Naive thymus-derived CD4-positive, alpha-beta T cell (primary cell): ENCODE measurements at regions of chr6 and their contacts with region 1.

Region 1: GRCh38 chr6:158072083-158072721 is 90.5 kb downstream of the SYNJ2 start:
- DNase-seq: peak; percentile 28 to 69 (median 65)
- ATAC-seq: peak; percentile 85
- H3K4me3 ChIP-seq: no peak overlapping the region
- H3K4me3 Mint-ChIP-seq: no peak overlapping the region
- H3K27ac ChIP-seq: no peak overlapping the region
- H3K27ac Mint-ChIP-seq: peak overlapping the region; percentile 32 to 91 (median 55)
- H3K4me1 ChIP-seq: peaks cover 0 to 5% of the 10 kb centered on the region in 2 donors
- H3K4me1 Mint-ChIP-seq: peaks cover 5 to 31% (median 6%) of the 10 kb centered on the region in 7 donors
- H3K27me3 ChIP-seq: no peaks in the 10 kb centered on the region
- H3K27me3 Mint-ChIP-seq: no peaks in the 10 kb centered on the region

Region 2: DNA sequence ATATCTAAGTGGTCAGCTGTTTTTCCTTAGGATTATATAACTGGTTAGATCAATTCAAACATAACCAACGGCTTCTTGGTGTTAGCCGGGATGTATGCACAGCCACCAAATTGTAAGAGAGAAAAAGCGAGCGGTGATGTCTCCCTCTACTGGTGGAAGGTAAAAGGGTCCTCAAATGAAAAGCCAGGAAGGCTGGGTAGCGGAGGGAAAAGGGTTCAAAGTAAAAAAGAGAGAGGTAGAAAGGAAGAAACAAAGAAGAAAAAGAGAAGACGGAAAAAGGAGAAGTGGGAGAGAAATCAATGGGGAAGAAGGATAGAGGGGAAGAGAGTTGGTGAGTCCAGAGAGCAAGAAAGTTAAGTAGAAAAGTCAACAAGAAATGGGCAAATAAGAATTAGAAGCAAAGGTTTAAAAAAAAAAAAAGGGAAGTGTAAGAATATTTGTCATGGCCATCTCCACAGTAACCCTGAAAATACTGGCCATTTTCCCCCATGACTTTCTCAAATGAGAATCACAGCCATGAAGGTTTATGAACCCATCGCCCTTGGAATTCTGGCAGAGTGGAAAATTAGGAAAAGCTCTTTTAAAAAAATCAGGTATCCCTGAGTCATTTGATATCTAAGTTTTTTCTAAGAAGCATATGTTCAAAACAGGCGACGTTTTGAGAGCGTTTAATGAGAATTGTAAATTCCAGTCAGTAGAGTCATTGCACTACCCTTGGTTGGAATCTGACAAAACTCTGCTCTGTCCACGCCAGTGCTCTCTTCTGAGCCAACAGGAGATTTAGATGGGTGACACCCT is 404.8 kb before region 1 on chr6:
- CTCF ChIA-PET with region 1: no interaction called
- POLR2A ChIA-PET with region 1: no interaction called
- intact Hi-C with region 1: loop called in 1 of 2 experiments (anchors 1 kb)
- DNase-seq: peak in 8 of 9 donors; percentile 28 to 67 (median 54)
- ATAC-seq: peak; percentile 83
- H3K4me3 ChIP-seq: no peak overlapping the region
- H3K4me3 Mint-ChIP-seq: peak overlapping the region in 4 of 10 donors; percentile 1 to 35 (median 10)
- H3K27ac ChIP-seq: no peak overlapping the region
- H3K27ac Mint-ChIP-seq: peak overlapping the region in 7 of 9 donors; percentile 4 to 38 (median 19)
- H3K4me1 ChIP-seq: peaks cover 0 to 15% of the 10 kb centered on the region in 2 donors
- H3K4me1 Mint-ChIP-seq: peaks cover 7 to 31% (median 23%) of the 10 kb centered on the region in 7 donors
- H3K27me3 ChIP-seq: no peaks in the 10 kb centered on the region
- H3K27me3 Mint-ChIP-seq: peaks cover 0 to 6% (median 0%) of the 10 kb centered on the region in 5 donors

Region 3: GRCh38 chr6:157929765-157930319 is 142.4 kb before region 1 on chr6:
- CTCF ChIA-PET with region 1: no interaction called
- POLR2A ChIA-PET with region 1: no interaction called
- intact Hi-C with region 1: loop called in 1 of 2 experiments (anchors 5 kb)
- DNase-seq: no peak
- ATAC-seq: no peak
- H3K4me3 ChIP-seq: no peak overlapping the region
- H3K4me3 Mint-ChIP-seq: no peak overlapping the region
- H3K27ac ChIP-seq: no peak overlapping the region
- H3K27ac Mint-ChIP-seq: peak overlapping the region in 1 of 9 donors; percentile 55
- H3K4me1 ChIP-seq: no peaks in the 10 kb centered on the region
- H3K4me1 Mint-ChIP-seq: no peaks in the 10 kb centered on the region
- H3K27me3 ChIP-seq: no peaks in the 10 kb centered on the region
- H3K27me3 Mint-ChIP-seq: no peaks in the 10 kb centered on the region

Region 4: DNA sequence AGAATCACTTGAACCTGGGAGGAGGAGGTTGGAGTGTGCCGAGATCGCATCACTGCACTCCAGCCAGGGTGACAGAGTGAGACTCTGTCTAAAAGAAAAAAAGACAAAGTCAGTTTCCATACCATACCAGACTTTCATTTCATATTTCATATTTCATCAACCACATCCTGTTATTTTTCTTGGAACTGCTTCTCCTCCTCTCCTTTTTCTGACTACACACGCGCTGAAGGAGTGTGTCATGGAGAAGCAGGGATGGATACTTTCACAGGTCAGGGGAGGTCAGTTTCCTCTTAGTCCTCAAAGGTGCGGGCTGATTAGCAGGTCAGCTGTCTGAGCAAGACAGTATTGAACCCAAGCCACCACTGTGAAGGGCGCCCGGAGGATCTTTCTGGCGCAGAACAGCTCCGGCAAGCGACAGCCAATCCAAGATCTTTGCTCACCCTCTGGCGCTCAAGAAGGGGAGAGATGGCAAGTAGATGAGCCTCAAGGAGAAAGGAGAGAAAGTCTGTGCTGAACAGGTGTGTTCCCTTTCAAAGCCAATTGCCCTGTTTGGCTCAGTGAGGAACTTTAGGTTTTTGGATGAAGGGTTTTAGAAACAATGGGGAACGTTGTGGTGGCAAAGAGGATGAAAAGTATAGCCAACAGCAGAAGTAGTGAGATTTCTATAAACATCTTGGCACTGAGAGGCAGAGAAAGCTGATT is 109.5 kb before region 1 on chr6:
- CTCF ChIA-PET with region 1: interaction called, 3 read pairs
- POLR2A ChIA-PET with region 1: no interaction called
- intact Hi-C with region 1: loop called in 1 of 2 experiments (anchors 5 kb)
- DNase-seq: peak in 4 of 9 donors; percentile 26 to 50 (median 41)
- ATAC-seq: peak; percentile 31
- H3K4me3 ChIP-seq: peak overlapping the region; percentile 14
- H3K4me3 Mint-ChIP-seq: peak overlapping the region; percentile 51 to 84 (median 72)
- H3K27ac ChIP-seq: peak overlapping the region; percentile 25
- H3K27ac Mint-ChIP-seq: peak overlapping the region; percentile 77 to 97 (median 89)
- H3K4me1 ChIP-seq: peaks cover 0 to 14% of the 10 kb centered on the region in 2 donors
- H3K4me1 Mint-ChIP-seq: peaks cover 8 to 32% (median 28%) of the 10 kb centered on the region in 7 donors
- H3K27me3 ChIP-seq: no peaks in the 10 kb centered on the region
- H3K27me3 Mint-ChIP-seq: no peaks in the 10 kb centered on the region

Region 5: GRCh38 chr6:158441716-158442215 is 369.6 kb after region 1 on chr6:
- CTCF ChIA-PET with region 1: no interaction called
- POLR2A ChIA-PET with region 1: no interaction called
- intact Hi-C with region 1: no loop called
- DNase-seq: no peak
- ATAC-seq: no peak
- H3K4me3 ChIP-seq: no peak overlapping the region
- H3K4me3 Mint-ChIP-seq: no peak overlapping the region
- H3K27ac ChIP-seq: no peak overlapping the region
- H3K27ac Mint-ChIP-seq: peak overlapping the region in 1 of 9 donors; percentile 18
- H3K4me1 ChIP-seq: no peaks in the 10 kb centered on the region
- H3K4me1 Mint-ChIP-seq: peaks cover 0 to 12% (median 4%) of the 10 kb centered on the region in 7 donors
- H3K27me3 ChIP-seq: no peaks in the 10 kb centered on the region
- H3K27me3 Mint-ChIP-seq: no peaks in the 10 kb centered on the region